ENCODE measurements at regions of chr11 and their contacts with region 1.

Region 1: GRCh38 chr11:69832561-69833413 is 13.6 kb upstream of the FGF3 start:
- DNase-seq: no peak
- H3K4me3 ChIP-seq: no peak overlapping the region
- H3K27ac ChIP-seq: no peak overlapping the region
- H3K4me1 ChIP-seq: no peaks in the 10 kb centered on the region
- H3K27me3 ChIP-seq: no peaks in the 10 kb centered on the region
- CTCF ChIP-seq: no peak

Region 2: GRCh38 chr11:69815973-69816372 is 16.8 kb before region 1 on chr11:
- CTCF ChIA-PET with region 1: interaction called, 15 read pairs
- POLR2A ChIA-PET with region 1: no interaction called
- intact Hi-C with region 1: no loop called
- DNase-seq: no peak
- H3K4me3 ChIP-seq: no peak overlapping the region
- H3K27ac ChIP-seq: no peak overlapping the region
- H3K4me1 ChIP-seq: peaks cover 18% of the 10 kb centered on the region; the same call in 1 of the 2 replicates
- H3K27me3 ChIP-seq: peaks cover 45% of the 10 kb centered on the region
- CTCF ChIP-seq: no peak

Region 3: DNA sequence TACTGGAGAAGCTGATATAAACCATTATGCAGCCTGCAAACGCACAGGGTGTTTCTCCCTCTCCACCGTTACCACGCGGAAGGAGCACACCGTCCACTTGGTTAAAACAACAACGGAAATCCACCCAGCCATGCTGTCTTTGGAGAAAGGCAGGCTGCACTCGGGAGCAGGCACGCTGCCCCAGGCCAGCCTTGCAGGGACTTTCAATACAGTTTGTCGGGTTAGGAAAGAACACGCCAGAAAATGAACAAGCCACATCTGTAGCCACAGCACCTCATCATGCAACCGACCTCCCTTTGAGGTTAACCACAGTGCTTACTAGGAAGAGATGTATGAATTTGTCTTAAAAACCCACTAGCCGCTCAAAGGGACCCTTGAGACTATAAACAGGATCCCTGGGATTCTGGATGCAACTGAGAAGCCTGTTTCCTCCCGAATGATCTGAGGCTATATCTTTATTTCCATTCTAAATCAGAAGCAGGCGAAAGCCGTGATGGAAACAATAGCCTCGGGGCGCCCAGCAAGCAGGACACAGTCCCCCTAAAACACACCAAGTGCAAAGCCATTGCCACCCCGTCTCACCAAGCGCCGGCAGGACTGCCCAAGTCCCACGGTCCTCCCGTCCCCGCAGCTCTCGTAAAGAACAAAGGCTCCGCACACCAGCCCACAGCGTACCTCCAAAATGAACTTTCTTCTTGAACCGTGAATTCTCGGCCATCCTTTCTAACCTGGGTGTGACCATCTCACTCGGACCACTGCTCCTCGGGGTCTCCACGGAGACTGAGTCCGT is 884.4 kb after region 1 on chr11:
- CTCF ChIA-PET with region 1: no interaction called
- POLR2A ChIA-PET with region 1: interaction called, 34 read pairs
- intact Hi-C with region 1: no loop called
- DNase-seq: no peak
- H3K4me3 ChIP-seq: no peak overlapping the region
- H3K27ac ChIP-seq: no peak overlapping the region
- H3K4me1 ChIP-seq: no peaks in the 10 kb centered on the region
- H3K27me3 ChIP-seq: no peaks in the 10 kb centered on the region
- CTCF ChIP-seq: no peak

Measured in PC-9 (cell line).